Activated CD8-positive, alpha-beta T cell treated with anti-CD3 and anti-CD28 coated beads, Interleukin-2, amount 10 ng/mL, durations not matched to agents 7 days and 5 days (primary cell): ENCODE measurements at regions of chr17 and their contacts with region 1.

Region 1: DNA sequence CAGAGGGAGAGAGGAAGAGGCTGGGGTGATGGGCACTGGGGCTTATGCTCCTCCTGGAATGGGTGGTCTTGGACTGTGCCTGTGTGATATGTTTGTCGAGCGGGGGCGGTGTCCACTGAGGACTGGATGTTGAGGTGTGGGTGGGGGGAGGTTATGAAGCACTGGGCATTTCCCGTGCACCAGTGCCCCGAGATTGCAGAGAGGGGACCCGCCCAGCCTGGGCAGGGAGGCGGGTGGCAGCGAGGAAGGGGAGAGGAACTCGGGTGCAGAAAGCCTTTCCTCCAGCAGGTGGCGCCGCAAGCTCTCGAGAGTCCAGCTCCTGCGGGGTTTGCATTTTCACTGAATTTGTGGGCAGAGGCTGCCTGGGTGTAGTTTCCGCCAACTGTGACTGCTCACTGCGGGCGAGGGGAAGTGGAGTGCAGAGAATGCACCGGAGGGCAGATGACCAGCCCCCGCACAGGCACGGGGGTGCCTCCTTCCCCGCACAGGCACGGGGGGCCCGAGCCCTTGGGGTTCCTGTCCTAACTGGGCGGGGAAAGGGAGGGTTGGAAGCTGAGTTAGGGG is 190.6 kb downstream of the SEC14L1 start:
- DNase-seq: peak; percentile 97
- ATAC-seq: peak; percentile 90
- H3K4me3 Mint-ChIP-seq: peak overlapping the region; percentile 76
- H3K27ac Mint-ChIP-seq: peak overlapping the region; percentile 88
- H3K4me1 Mint-ChIP-seq: peaks cover 58% of the 10 kb centered on the region
- H3K27me3 Mint-ChIP-seq: peaks cover 2% of the 10 kb centered on the region

Region 2: GRCh38 chr17:77345260-77345910 is 14.0 kb after region 1 on chr17:
- CTCF ChIA-PET with region 1: interaction called, 28 read pairs
- POLR2A ChIA-PET with region 1: interaction called, 3 read pairs
- DNase-seq: no peak
- ATAC-seq: no peak
- H3K4me3 Mint-ChIP-seq: no peak overlapping the region
- H3K27ac Mint-ChIP-seq: peak overlapping the region; percentile 23
- H3K4me1 Mint-ChIP-seq: peaks cover 43% of the 10 kb centered on the region
- H3K27me3 Mint-ChIP-seq: no peaks in the 10 kb centered on the region

Region 3: DNA sequence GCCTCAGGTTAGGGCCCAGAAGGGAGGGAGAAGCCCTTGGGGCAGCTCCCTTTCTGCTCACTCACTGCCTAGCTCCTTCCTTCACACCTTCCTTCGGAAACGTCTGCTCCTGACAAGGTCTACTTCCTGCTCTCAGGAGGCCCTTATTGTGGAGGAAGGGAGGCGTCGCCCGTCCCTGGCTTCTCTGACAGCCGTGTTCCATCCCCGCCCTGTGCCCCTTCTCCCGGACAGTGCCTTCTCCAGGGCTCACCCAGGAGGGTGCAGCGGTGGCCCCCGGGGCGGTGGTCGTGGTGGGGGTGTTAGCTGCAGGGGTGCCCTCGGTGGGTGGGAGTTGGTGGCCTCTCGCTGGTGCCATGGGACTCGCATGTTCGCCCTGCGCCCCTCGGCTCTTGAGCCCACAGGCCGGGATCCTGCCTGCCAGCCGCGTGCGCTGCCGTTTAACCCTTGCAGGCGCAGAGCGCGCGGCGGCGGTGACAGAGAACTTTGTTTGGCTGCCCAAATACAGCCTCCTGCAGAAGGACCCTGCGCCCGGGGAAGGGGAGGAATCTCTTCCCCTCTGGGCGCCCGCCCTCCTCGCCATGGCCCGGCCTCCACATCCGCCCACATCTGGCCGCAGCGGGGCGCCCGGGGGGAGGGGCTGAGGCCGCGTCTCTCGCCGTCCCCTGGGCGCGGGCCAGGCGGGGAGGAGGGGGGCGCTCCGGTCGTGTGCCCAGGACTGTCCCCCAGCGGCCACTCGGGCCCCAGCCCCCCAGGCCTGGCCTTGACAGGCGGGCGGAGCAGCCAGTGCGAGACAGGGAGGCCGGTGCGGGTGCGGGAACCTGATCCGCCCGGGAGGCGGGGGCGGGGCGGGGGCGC is 41.3 kb after region 1 on chr17:
- CTCF ChIA-PET with region 1: interaction called, 59 read pairs
- POLR2A ChIA-PET with region 1: interaction called, 8 read pairs
- DNase-seq: peak; percentile 83
- ATAC-seq: peak; percentile 49
- H3K4me3 Mint-ChIP-seq: peak overlapping the region; percentile 79
- H3K27ac Mint-ChIP-seq: peak overlapping the region; percentile 88
- H3K4me1 Mint-ChIP-seq: peaks cover 56% of the 10 kb centered on the region
- H3K27me3 Mint-ChIP-seq: peaks cover 4% of the 10 kb centered on the region

Region 4: GRCh38 chr17:77391668-77392375 is 60.4 kb after region 1 on chr17:
- CTCF ChIA-PET with region 1: interaction called, 28 read pairs
- POLR2A ChIA-PET with region 1: no interaction called
- DNase-seq: peak; percentile 84
- ATAC-seq: peak; percentile 54
- H3K4me3 Mint-ChIP-seq: peak overlapping the region; percentile 84
- H3K27ac Mint-ChIP-seq: peak overlapping the region; percentile 92
- H3K4me1 Mint-ChIP-seq: peaks cover 89% of the 10 kb centered on the region
- H3K27me3 Mint-ChIP-seq: no peaks in the 10 kb centered on the region

Region 5: GRCh38 chr17:77494664-77495435 is 163.5 kb after region 1 on chr17:
- CTCF ChIA-PET with region 1: interaction called, 32 read pairs
- POLR2A ChIA-PET with region 1: no interaction called
- DNase-seq: peak; percentile 83
- ATAC-seq: peak; percentile 66
- H3K4me3 Mint-ChIP-seq: no peak overlapping the region
- H3K27ac Mint-ChIP-seq: peak overlapping the region; percentile 78
- H3K4me1 Mint-ChIP-seq: peaks cover 40% of the 10 kb centered on the region
- H3K27me3 Mint-ChIP-seq: no peaks in the 10 kb centered on the region